HAP-1 (cell line): ENCODE measurements at regions of chr22 and their contacts with region 1.

Region 1: GRCh38 chr22:23281406-23282088 is 101.2 kb downstream of the BCR start:
- DNase-seq: peak; percentile 43 to 90
- H3K4me3 ChIP-seq: no peak overlapping the region
- H3K4me1 ChIP-seq: no peaks in the 10 kb centered on the region
- H3K27me3 ChIP-seq: no peaks in the 10 kb centered on the region

Region 2: DNA sequence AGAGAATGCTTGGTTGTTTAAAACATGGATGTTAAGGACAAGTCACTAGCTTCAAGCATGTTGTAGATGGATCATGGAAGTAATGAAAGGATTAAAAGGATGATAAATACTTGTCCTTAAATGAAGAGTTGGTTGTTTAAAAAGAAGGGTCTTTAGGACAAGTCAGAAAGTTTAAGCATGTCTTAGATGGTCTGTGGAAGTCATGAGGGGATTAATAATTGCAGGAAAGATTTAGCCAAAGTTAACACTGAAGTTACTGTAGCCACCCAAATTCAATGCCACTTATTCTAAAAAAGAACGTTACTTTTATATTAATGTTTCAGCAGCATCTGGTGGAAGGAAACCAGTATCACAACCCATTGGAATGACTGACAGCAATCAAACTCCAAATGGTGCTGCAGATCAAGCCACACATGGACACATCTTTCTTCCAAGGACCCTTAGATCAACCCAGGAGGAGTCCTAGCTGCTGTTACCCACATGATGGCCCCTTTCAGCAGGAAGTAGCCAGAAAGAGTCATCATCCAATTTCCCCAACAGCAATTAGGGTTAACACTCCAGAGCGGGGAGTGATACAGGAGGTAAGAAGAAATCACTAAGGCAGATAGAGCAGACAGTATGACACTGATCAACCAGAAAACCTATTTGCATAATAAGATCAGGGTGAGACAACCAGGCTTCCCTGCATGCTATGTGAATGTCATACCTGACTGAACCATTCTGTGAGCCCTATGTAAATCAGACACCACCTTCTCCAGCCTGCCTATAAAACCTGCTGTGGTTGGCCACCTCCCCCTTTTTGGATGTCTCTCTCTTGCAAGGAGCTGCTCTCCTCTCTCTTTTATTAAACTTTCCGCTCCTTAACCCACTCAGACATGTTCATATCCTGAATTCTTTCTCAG is 299.6 kb before region 1 on chr22:
- in situ Hi-C with region 1: loop called (anchors 10 kb)
- DNase-seq: no peak
- H3K4me3 ChIP-seq: no peak overlapping the region
- H3K4me1 ChIP-seq: no peaks in the 10 kb centered on the region
- H3K27me3 ChIP-seq: 0 out of 2 replicates have a peak, but pooled peaks cover 5% of the 10 kb centered on the region

Region 3: DNA sequence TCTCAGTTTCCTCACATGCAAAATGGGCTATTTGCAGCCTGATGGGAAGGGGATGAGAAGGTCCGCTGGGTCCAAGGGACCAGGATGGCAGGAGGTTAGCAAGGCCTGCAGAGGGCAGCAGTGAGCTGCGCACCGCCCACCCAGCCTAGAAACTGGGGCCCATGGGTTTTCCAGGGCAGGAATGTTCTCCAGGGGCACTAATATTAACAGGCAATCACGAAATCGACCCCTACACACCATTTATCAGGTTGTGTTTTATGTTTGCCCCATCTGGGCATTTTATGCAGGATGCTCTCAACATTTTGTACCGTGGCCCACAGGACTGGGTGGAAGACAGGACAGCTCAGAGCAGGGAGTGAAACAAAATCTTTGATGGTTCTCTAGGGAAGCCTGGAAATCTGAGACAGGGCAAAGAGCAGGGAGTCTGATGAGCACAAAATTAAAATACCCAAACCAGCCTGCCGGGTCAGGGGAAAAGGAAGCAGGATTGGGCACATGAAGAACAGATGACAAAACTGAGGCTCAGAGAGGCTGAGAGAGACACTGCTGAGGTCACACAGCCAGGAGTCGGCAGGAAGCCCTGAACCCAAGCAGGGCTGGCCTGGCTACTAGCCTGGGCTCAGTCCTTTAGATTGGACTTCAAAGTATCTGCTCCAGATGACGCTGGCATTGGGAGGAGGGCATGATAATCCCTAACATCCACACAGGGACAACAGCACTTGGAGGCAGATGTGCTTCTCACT is 102.9 kb before region 1 on chr22:
- in situ Hi-C with region 1: loop called (anchors 5 kb)
- DNase-seq: peak; percentile 57 to 82
- H3K4me3 ChIP-seq: no peak overlapping the region
- H3K4me1 ChIP-seq: peaks cover 3% of the 10 kb centered on the region; the same call in 1 of the 2 replicates
- H3K27me3 ChIP-seq: peaks cover 8% of the 10 kb centered on the region